ENCODE measurements at regions of chr10 and their contacts with region 1.

Region 1: GRCh38 chr10:28381903-28382347 is 79.1 kb upstream of the MPP7 start:
- DNase-seq: peak; percentile 91
- ATAC-seq: peak; percentile 81
- H3K4me3 Mint-ChIP-seq: no peak overlapping the region
- H3K27ac Mint-ChIP-seq: no peak overlapping the region
- H3K4me1 Mint-ChIP-seq: peaks cover 29% of the 10 kb centered on the region
- H3K27me3 Mint-ChIP-seq: peaks cover 2% of the 10 kb centered on the region

Region 2: GRCh38 chr10:27558612-27559020 is 823.3 kb before region 1 on chr10:
- CTCF ChIA-PET with region 1: no interaction called
- POLR2A ChIA-PET with region 1: no interaction called
- intact Hi-C with region 1: loop called in 1 of 2 experiments (anchors 5 kb)
- DNase-seq: peak; percentile 50
- ATAC-seq: peak; percentile 30
- H3K4me3 Mint-ChIP-seq: no peak overlapping the region
- H3K27ac Mint-ChIP-seq: no peak overlapping the region
- H3K4me1 Mint-ChIP-seq: no peaks in the 10 kb centered on the region
- H3K27me3 Mint-ChIP-seq: no peaks in the 10 kb centered on the region

Region 3: GRCh38 chr10:28179006-28179742 is 202.8 kb before region 1 on chr10:
- CTCF ChIA-PET with region 1: interaction called, 7 read pairs
- POLR2A ChIA-PET with region 1: no interaction called
- intact Hi-C with region 1: loop called (anchors 2 kb)
- DNase-seq: peak; percentile 51
- ATAC-seq: peak; percentile 28
- H3K4me3 Mint-ChIP-seq: peak overlapping the region; percentile 43
- H3K27ac Mint-ChIP-seq: peak overlapping the region; percentile 97
- H3K4me1 Mint-ChIP-seq: peaks cover 36% of the 10 kb centered on the region
- H3K27me3 Mint-ChIP-seq: no peaks in the 10 kb centered on the region

Region 4: GRCh38 chr10:28256797-28257196 is 125.1 kb before region 1 on chr10:
- CTCF ChIA-PET with region 1: interaction called, 160 read pairs
- POLR2A ChIA-PET with region 1: no interaction called
- intact Hi-C with region 1: no loop called
- DNase-seq: no peak
- ATAC-seq: no peak
- H3K4me3 Mint-ChIP-seq: no peak overlapping the region
- H3K27ac Mint-ChIP-seq: no peak overlapping the region
- H3K4me1 Mint-ChIP-seq: peaks cover 35% of the 10 kb centered on the region
- H3K27me3 Mint-ChIP-seq: no peaks in the 10 kb centered on the region

Region 5: GRCh38 chr10:28302638-28303488 is 79.1 kb before region 1 on chr10 and contains the start of gene MPP7:
- CTCF ChIA-PET with region 1: interaction called, 75 read pairs
- POLR2A ChIA-PET with region 1: interaction called, 9 read pairs
- intact Hi-C with region 1: loop called (anchors 1 kb)
- DNase-seq: peak; percentile 97
- ATAC-seq: peak; percentile 97
- H3K4me3 Mint-ChIP-seq: peak within 1 kb of the TSS; percentile 90
- H3K27ac Mint-ChIP-seq: peak within 1 kb of the TSS; percentile 80
- H3K4me1 Mint-ChIP-seq: peaks cover 49% of the 10 kb centered on the region
- H3K27me3 Mint-ChIP-seq: no peaks in the 10 kb centered on the region
- total RNA-seq, gene MPP7: 10.9 to 11.0 TPM

Region 6: GRCh38 chr10:28355376-28355775 is 26.5 kb before region 1 on chr10:
- CTCF ChIA-PET with region 1: interaction called, 11 read pairs
- POLR2A ChIA-PET with region 1: no interaction called
- intact Hi-C with region 1: no loop called
- DNase-seq: no peak
- ATAC-seq: no peak
- H3K4me3 Mint-ChIP-seq: no peak overlapping the region
- H3K27ac Mint-ChIP-seq: no peak overlapping the region
- H3K4me1 Mint-ChIP-seq: peaks cover 2% of the 10 kb centered on the region
- H3K27me3 Mint-ChIP-seq: no peaks in the 10 kb centered on the region

Region 7: DNA sequence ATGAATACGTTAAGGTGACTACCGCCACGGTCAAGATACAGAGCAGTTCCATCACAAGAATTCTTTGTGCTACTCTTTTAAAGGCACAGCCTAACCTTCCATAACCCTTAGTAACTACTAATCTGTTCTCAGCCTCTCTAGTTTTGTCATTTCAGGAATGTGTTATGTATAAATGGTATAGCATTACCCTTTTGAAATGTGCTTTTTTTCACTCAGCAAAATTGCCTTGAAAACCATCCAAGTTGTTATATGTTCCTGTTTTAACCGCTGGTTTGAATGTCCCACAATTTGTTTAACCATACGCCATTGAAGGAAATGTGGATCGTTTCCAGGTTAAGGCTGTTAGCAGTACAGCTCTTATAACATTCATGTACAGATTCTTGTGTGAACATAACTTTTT is 183.0 kb after region 1 on chr10:
- CTCF ChIA-PET with region 1: no interaction called
- POLR2A ChIA-PET with region 1: no interaction called
- intact Hi-C with region 1: no loop called
- DNase-seq: no peak
- ATAC-seq: peak; percentile 71
- H3K4me3 Mint-ChIP-seq: no peak overlapping the region
- H3K27ac Mint-ChIP-seq: no peak overlapping the region
- H3K4me1 Mint-ChIP-seq: peaks cover 84% of the 10 kb centered on the region
- H3K27me3 Mint-ChIP-seq: no peaks in the 10 kb centered on the region